A549 (cell line): ENCODE measurements at regions of chr5 and their contacts with region 1.

Region 1: DNA sequence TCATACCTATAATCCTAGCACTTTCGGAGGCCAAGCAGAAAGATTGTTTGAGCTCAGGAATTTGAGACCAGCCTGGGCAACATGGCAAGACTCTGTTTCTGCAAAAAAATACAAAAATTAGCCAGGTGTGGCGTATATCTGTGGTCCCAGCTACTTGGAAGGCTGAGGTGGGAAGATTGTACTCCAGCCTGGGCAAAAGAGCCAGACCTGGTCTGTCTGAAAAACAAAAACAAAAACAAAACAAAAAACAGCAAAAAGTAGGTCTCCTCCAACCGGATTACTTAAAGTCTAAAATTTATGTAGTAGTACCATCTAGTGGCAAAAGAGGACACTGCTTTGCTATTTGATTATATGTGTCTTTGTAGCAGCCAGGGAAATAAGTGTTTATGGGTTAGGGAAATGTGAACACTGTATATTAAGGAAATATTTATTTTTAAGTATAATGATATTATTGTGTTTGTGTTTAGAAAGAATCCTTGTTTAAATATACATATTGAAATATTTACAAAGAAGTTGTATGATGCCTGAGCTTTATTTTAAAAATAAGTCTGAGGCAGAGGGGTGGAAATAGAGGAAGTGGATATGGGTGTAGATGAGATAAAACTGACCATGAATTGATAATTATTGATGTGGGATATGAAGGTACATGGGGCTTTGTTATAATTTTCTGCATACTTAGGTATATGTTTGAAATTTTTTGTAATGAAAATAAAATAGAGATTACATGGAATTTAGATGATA is 20.0 kb downstream of the APC start:
- DNase-seq: peak; percentile 34 to 65
- ATAC-seq: peak; percentile 85 to 93
- H3K4me3 ChIP-seq: no peak overlapping the region
- H3K27ac ChIP-seq: no peak overlapping the region
- H3K4me1 ChIP-seq: peaks cover 18% of the 10 kb centered on the region
- CTCF ChIP-seq: peak; percentile 84
- EP300 ChIP-seq: no peak
- POLR2A ChIP-seq: no peak
- RAD21 ChIP-seq: peak; percentile 87 to 91

Region 2: DNA sequence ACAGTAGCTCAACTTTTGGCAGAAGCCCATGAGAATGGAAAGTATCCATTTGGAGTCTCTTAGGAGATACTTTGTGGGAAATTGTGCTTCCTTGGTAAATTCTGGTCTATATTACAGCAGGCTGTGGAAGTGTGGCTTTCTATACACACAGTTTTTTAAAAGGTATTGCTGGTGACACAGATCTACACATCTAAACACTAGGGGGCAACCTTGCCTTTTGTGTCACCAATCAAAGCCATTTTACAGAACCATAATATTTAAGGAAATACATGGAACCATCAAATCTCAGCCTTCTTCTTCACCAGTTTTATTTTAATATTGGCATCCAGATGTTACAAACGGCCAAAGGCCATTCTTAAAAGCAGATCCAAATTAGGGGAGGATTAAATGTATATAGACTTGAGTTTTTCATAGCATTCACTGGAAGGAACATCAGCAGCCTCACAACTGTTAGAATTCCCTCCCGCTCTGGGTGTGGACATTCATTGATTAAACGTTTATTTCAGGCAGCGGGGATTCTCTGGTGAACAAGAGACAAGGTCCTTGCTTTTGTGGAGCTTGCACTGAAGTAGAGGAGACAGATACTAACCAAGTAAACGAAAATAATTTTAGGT is 206.1 kb before region 1 on chr5:
- CTCF ChIA-PET with region 1: interaction called, 125 read pairs
- POLR2A ChIA-PET with region 1: no interaction called
- DNase-seq: peak; percentile 56 to 66
- ATAC-seq: peak; percentile 78 to 88
- H3K4me3 ChIP-seq: no peak overlapping the region
- H3K27ac ChIP-seq: no peak overlapping the region
- H3K4me1 ChIP-seq: peaks cover 7% of the 10 kb centered on the region; the same call in 1 of the 3 replicates
- CTCF ChIP-seq: peak; percentile 89
- EP300 ChIP-seq: no peak
- POLR2A ChIP-seq: no peak
- RAD21 ChIP-seq: peak; percentile 87 to 89

Region 3: GRCh38 chr5:112691758-112692157 is 65.9 kb before region 1 on chr5:
- CTCF ChIA-PET with region 1: interaction called, 21 read pairs
- POLR2A ChIA-PET with region 1: no interaction called
- DNase-seq: peak; percentile 38 to 68
- ATAC-seq: peak; percentile 78 to 94
- H3K4me3 ChIP-seq: no peak overlapping the region
- H3K27ac ChIP-seq: no peak overlapping the region
- H3K4me1 ChIP-seq: no peaks in the 10 kb centered on the region
- CTCF ChIP-seq: peak; percentile 54
- EP300 ChIP-seq: no peak
- POLR2A ChIP-seq: no peak
- RAD21 ChIP-seq: peak; percentile 64 to 86

Region 4: GRCh38 chr5:112707187-112708102 is 50.2 kb before region 1 on chr5:
- CTCF ChIA-PET with region 1: interaction called, 13 read pairs
- POLR2A ChIA-PET with region 1: no interaction called
- DNase-seq: peak; percentile 98 to 99
- ATAC-seq: peak; percentile 91 to 96
- H3K4me3 ChIP-seq: peak overlapping the region; percentile 60
- H3K27ac ChIP-seq: peak overlapping the region; percentile 90 to 97
- H3K4me1 ChIP-seq: peaks cover 17% of the 10 kb centered on the region
- CTCF ChIP-seq: no peak
- EP300 ChIP-seq: no peak
- POLR2A ChIP-seq: peak; percentile 88
- RAD21 ChIP-seq: no peak

Region 5: GRCh38 chr5:112737463-112738190 is 20.0 kb before region 1 on chr5 and contains the start of gene APC:
- CTCF ChIA-PET with region 1: interaction called, 12 read pairs
- POLR2A ChIA-PET with region 1: no interaction called
- DNase-seq: peak; percentile 51 to 69
- ATAC-seq: peak; percentile 99
- H3K4me3 ChIP-seq: peak within 1 kb of the TSS; percentile 43
- H3K27ac ChIP-seq: peak within 1 kb of the TSS; percentile 53 to 76
- H3K4me1 ChIP-seq: peaks cover 18% of the 10 kb centered on the region
- CTCF ChIP-seq: no peak
- EP300 ChIP-seq: no peak
- POLR2A ChIP-seq: no peak
- RAD21 ChIP-seq: no peak
- polyA plus RNA-seq, gene APC: 17.0 and 21.2 TPM in 2 replicates

Region 6: DNA sequence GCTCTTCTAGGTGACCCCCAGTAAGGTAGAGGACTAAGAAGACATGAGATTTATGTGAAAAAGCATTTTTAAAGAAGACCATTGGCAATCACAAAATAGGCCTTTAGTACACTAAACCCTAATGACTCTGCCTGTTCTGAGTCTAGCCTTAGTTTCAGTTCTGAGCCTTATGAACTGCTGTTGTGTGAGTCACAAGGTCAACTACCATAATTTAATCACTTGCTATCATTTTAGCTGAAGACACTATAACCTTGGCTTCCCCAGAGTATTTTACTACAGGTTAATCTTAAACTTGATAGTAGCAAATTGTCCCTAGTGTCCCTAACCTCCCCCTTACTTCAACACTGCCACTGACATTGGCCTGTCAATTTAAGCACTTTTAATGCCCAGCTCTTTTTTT is 14.5 kb after region 1 on chr5:
- CTCF ChIA-PET with region 1: interaction called, 13 read pairs
- POLR2A ChIA-PET with region 1: no interaction called
- DNase-seq: no peak
- ATAC-seq: no peak
- H3K4me3 ChIP-seq: no peak overlapping the region
- H3K27ac ChIP-seq: no peak overlapping the region
- H3K4me1 ChIP-seq: peaks cover 6% of the 10 kb centered on the region; the same call in 1 of the 3 replicates
- CTCF ChIP-seq: no peak
- EP300 ChIP-seq: no peak
- POLR2A ChIP-seq: no peak
- RAD21 ChIP-seq: no peak

Region 7: GRCh38 chr5:113162770-113163169 is 405.1 kb after region 1 on chr5:
- CTCF ChIA-PET with region 1: no interaction called
- POLR2A ChIA-PET with region 1: no interaction called
- DNase-seq: no peak
- ATAC-seq: no peak
- H3K4me3 ChIP-seq: no peak overlapping the region
- H3K27ac ChIP-seq: no peak overlapping the region
- H3K4me1 ChIP-seq: no peaks in the 10 kb centered on the region
- CTCF ChIP-seq: no peak
- EP300 ChIP-seq: no peak
- POLR2A ChIP-seq: no peak
- RAD21 ChIP-seq: no peak